CD14-positive monocyte (primary cell): ENCODE measurements at regions of chr17 and their contacts with region 1.

Region 1: DNA sequence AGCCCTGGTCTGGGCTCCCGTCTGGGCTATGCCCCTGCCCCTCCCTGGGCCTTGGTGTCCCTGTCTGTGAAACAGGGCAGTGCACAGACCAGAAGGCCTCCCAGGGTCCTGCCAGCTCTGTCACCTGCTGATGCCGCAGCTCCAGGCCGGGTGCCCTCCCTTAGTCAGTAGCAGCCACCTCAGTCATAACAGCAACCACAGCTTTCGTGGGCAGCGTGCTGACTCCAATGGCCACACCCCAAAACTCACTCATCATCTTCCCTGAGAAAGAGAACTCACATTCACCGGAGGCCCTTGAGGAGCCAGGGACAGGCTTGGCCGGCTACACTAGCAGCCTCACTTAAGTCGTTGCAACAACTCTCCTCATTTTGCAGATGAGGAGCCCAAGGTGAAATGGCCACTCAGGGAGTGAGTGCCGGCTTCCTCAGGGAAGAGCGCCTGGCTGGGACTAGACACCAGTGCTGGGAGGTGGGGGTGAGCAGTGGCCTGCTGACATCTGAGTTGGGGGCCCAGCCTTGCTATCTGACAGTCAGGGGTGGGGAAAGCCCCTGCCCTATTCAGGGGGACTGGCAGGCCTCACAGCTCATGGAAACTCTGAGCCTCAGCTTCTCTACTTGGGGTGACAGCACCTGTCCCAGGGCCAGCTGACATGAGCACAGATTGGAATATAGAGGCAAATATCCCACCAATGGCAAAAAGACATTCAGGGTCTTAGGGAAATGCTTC is 22.6 kb downstream of the SLC5A10 start:
- DNase-seq: no peak
- H3K4me3 ChIP-seq: no peak overlapping the region
- H3K4me3 Mint-ChIP-seq: no peak overlapping the region
- H3K27ac ChIP-seq: no peak overlapping the region
- H3K27ac Mint-ChIP-seq: no peak overlapping the region
- H3K4me1 ChIP-seq: peaks cover 2% of the 10 kb centered on the region in 2 donors
- H3K4me1 Mint-ChIP-seq: peaks cover 5% of the 10 kb centered on the region
- H3K27me3 ChIP-seq: no peaks in the 10 kb centered on the region
- H3K27me3 Mint-ChIP-seq: peaks cover 1 to 6% (median 4%) of the 10 kb centered on the region in 3 donors
- CTCF ChIP-seq: no peak

Region 2: GRCh38 chr17:18889658-18890057 is 84.9 kb before region 1 on chr17:
- intact Hi-C with region 1: no loop called
- DNase-seq: no peak
- H3K4me3 ChIP-seq: no peak overlapping the region
- H3K4me3 Mint-ChIP-seq: no peak overlapping the region
- H3K27ac ChIP-seq: no peak overlapping the region
- H3K27ac Mint-ChIP-seq: no peak overlapping the region
- H3K4me1 ChIP-seq: no peaks in the 10 kb centered on the region
- H3K4me1 Mint-ChIP-seq: no peaks in the 10 kb centered on the region
- H3K27me3 ChIP-seq: no peaks in the 10 kb centered on the region
- H3K27me3 Mint-ChIP-seq: no peaks in the 10 kb centered on the region
- CTCF ChIP-seq: no peak

Region 3: DNA sequence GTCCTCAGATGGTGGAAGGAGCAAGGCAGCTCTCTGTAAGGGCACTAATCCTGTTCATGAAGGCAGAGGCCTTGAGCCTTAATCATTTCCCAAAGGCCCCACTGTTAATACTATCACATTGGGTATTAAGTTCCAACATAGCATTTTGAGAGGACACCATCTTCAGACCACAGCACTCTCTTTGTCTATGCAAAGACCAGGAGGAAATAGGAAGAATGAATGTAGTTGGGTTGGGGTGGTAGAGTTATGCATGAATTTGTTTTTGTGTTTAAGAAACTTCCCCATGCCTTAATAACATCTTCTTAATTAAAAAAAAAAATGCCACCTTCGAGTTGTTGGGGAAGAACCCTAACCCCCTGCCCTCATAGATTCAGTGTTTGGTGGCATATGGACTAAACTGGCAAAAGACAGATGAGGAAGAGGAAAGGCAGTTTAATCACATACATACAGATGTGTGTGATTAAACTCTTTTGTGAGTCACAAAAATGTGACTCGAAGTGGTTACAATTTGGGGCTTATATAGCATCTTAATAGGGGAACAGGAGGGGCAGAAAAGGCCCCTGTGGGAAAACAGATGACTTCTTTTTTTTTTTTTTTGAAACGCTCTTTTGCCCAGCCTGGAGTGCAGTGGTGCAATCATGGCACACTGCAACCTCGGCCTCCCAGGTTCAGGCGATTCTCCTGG is 57.6 kb before region 1 on chr17:
- intact Hi-C with region 1: loop called in 1 of 2 experiments (anchors 10 kb)
- DNase-seq: peak in 2 of 3 donors; percentile 3 to 52
- H3K4me3 ChIP-seq: no peak overlapping the region
- H3K4me3 Mint-ChIP-seq: no peak overlapping the region
- H3K27ac ChIP-seq: no peak overlapping the region
- H3K27ac Mint-ChIP-seq: peak overlapping the region in 2 of 7 donors; percentile 17 to 26
- H3K4me1 ChIP-seq: peaks cover 3 to 4% of the 10 kb centered on the region in 2 donors
- H3K4me1 Mint-ChIP-seq: peaks cover 16% of the 10 kb centered on the region
- H3K27me3 ChIP-seq: no peaks in the 10 kb centered on the region
- H3K27me3 Mint-ChIP-seq: no peaks in the 10 kb centered on the region
- CTCF ChIP-seq: no peak